ENCODE measurements at regions of chr3 and their contacts with region 1.

Region 1: GRCh38 chr3:42880601-42881451 is 5.1 kb upstream of the CYP8B1 start:
- DNase-seq: peak; percentile 95
- ATAC-seq: peak; percentile 99
- H3K4me3 Mint-ChIP-seq: peak overlapping the region; percentile 66
- H3K27ac Mint-ChIP-seq: peak overlapping the region; percentile 82
- H3K4me1 Mint-ChIP-seq: peaks cover 7% of the 10 kb centered on the region
- H3K27me3 Mint-ChIP-seq: no peaks in the 10 kb centered on the region

Region 2: DNA sequence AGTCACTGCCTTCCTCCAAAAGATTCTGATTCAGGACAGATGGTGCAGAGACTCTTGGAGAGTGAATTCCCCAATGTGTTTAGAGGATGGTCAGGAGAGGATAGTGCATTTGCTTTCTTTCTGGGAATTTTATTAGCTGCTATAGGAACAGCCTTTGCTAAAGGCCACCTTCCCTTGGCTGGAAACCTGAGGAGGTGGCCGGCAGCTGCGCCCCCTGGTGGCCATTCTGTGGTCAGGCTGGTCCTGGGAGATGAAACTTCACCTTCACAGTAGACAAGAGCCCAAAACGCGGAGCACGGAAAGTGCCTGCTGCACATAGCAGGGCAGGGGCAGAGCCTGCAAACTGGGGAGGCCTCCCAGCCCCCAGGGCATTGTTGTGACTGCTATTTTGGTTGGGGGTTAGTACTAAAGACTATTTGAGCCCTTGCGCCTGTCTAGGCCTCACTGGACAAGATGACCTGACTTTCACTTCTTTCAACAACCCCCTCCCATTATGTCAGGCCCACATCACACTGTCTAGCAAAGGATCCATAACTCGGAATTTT is 333.4 kb before region 1 on chr3:
- CTCF ChIA-PET with region 1: no interaction called
- POLR2A ChIA-PET with region 1: no interaction called
- intact Hi-C with region 1: loop called in 1 of 2 experiments (anchors 5 kb)
- DNase-seq: peak; percentile 80
- ATAC-seq: peak; percentile 77
- H3K4me3 Mint-ChIP-seq: no peak overlapping the region
- H3K27ac Mint-ChIP-seq: no peak overlapping the region
- H3K4me1 Mint-ChIP-seq: no peaks in the 10 kb centered on the region
- H3K27me3 Mint-ChIP-seq: no peaks in the 10 kb centered on the region

Region 3: GRCh38 chr3:42772670-42773408 is 108.0 kb before region 1 on chr3 and contains the start of gene CCDC13:
- CTCF ChIA-PET with region 1: interaction called, 25 read pairs
- POLR2A ChIA-PET with region 1: no interaction called
- intact Hi-C with region 1: loop called in 1 of 2 experiments (anchors 2 kb)
- DNase-seq: peak; percentile 96
- ATAC-seq: peak; percentile 96
- H3K4me3 Mint-ChIP-seq: peak within 1 kb of the TSS; percentile 83
- H3K27ac Mint-ChIP-seq: peak within 1 kb of the TSS; percentile 82
- H3K4me1 Mint-ChIP-seq: peaks cover 12% of the 10 kb centered on the region
- H3K27me3 Mint-ChIP-seq: no peaks in the 10 kb centered on the region
- total RNA-seq, gene CCDC13: 0.46 to 0.63 TPM

Region 4: GRCh38 chr3:42780892-42781700 is 99.7 kb before region 1 on chr3:
- CTCF ChIA-PET with region 1: interaction called, 25 read pairs
- POLR2A ChIA-PET with region 1: no interaction called
- intact Hi-C with region 1: loop called (anchors 1 kb)
- DNase-seq: peak; percentile 29
- ATAC-seq: peak; percentile 87
- H3K4me3 Mint-ChIP-seq: no peak overlapping the region
- H3K27ac Mint-ChIP-seq: no peak overlapping the region
- H3K4me1 Mint-ChIP-seq: no peaks in the 10 kb centered on the region
- H3K27me3 Mint-ChIP-seq: no peaks in the 10 kb centered on the region

Region 5: GRCh38 chr3:42831321-42831713 is 49.5 kb before region 1 on chr3:
- CTCF ChIA-PET with region 1: interaction called, 17 read pairs
- POLR2A ChIA-PET with region 1: no interaction called
- intact Hi-C with region 1: loop called (anchors 1 kb)
- DNase-seq: peak; percentile 90
- ATAC-seq: peak; percentile 92
- H3K4me3 Mint-ChIP-seq: no peak overlapping the region
- H3K27ac Mint-ChIP-seq: no peak overlapping the region
- H3K4me1 Mint-ChIP-seq: peaks cover 5% of the 10 kb centered on the region
- H3K27me3 Mint-ChIP-seq: peaks cover 2% of the 10 kb centered on the region